Heart left ventricle (tissue), 16 donors: ENCODE measurements at regions of chr13 and their contacts with region 1.

Region 1: DNA sequence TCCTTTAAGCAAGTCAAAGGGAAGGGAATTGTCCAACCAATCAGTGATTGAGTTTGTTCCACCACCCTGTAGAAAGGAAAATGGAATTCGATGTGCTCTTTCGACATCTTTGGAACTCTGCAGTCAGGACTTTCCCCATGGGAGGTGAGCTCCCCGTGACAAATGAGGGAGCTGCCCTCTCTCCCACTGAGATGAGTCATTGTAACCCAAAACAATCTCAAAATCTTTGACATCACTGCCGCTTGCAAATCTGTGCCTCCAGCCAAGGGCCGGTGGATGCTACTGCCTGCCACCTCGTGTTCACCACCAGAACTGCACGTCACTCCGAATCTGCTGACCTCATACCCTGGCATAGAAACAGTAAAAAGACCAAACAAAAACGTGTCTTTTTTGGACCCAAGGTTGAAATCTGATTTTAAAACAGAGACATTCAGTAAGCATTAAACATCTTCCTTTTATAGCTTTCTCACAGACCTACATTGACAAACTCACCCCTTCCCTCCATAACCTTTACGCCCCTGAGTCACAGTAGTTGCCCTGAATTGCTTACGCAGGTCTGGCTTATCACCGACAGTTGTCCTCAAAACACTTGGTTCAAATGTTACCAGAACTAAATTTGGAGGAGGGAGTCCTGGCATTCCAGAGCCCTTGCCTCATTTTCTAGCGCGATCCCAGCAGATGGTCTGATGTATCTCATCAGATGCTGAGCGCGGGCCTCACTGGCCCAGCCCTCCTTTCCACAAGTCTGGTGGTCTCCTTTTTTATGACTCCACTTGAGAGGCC is 105.2 kb downstream of the COL4A2 start:
- DNase-seq: peak; percentile 87 to 92 (median 88)
- ATAC-seq: peak; percentile 80 to 86 (median 83)
- H3K4me3 ChIP-seq: no peak overlapping the region
- H3K27ac ChIP-seq: peak overlapping the region; percentile 51 to 95 (median 83)
- H3K4me1 ChIP-seq: peaks cover 11 to 97% (median 76%) of the 10 kb centered on the region in 12 donors
- H3K27me3 ChIP-seq: no peaks in the 10 kb centered on the region
- CTCF ChIP-seq: peak; percentile 87 to 99 (median 92)
- POLR2A ChIP-seq: peak in 1 of 2 donors; percentile 26

Region 2: GRCh38 chr13:110225609-110226562 is 186.4 kb before region 1 on chr13:
- intact Hi-C with region 1: loop called (anchors 2 to 5 kb)
- DNase-seq: no peak
- ATAC-seq: no peak
- H3K4me3 ChIP-seq: no peak overlapping the region
- H3K27ac ChIP-seq: peak overlapping the region in 11 of 12 donors; percentile 8 to 88 (median 39)
- H3K4me1 ChIP-seq: peaks cover 9 to 79% (median 56%) of the 10 kb centered on the region in 12 donors
- H3K27me3 ChIP-seq: no peaks in the 10 kb centered on the region
- CTCF ChIP-seq: no peak
- POLR2A ChIP-seq: no peak

Region 3: DNA sequence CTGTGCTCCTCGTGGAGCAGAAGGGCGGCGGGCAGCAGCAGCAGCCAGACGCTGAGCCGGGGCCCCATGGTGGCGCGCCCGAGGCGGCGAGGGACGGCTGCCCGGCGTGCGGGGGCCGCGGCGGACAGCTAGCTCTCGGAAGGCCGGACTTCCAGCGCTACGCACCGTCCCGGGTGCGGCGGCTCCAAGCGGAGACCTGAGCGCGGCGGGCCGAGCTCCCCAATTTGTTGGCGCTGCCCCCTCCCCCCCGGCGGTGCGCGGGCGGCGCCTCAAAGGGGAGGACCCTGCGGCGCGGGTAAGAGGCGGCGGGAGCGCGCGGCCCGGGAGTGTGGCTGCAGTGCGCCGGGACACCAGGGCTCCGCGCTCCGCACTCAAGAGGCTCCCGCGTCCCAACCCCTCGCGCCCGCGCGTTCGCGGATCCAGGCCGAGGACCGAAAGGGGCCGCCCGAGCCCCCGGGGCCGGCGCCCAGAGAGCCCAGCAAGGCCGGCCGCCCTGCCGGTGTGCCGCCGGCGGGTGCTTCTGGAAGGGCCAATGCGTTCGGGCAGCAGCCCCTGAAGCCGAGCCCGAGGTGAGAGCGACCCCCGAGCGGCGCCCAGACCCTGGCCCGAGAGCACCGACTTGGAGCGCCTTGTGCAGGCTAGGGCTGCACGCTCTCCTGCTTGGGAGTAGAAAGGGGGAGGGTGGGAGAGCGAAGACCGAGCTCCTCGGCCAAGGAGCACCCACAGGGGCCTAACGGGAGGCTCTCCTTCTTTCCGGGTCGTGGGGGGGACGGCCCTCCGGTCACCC is 105.2 kb before region 1 on chr13 and contains the starts of genes COL4A1 and COL4A2:
- intact Hi-C with region 1: loop called in 8 of 10 experiments (anchors 2 to 10 kb)
- DNase-seq: peak; percentile 87 to 90 (median 88)
- ATAC-seq: peak; percentile 39 to 89 (median 76)
- H3K4me3 ChIP-seq: peak within 1 kb of the TSS; percentile 67 to 99 (median 87)
- H3K27ac ChIP-seq: peak within 1 kb of the TSS; percentile 92 to 99 (median 97)
- H3K4me1 ChIP-seq: peaks cover 17 to 75% (median 64%) of the 10 kb centered on the region in 12 donors
- H3K27me3 ChIP-seq: peaks cover 0 to 41% (median 0%) of the 10 kb centered on the region in 9 donors
- CTCF ChIP-seq: peak in 2 of 12 donors; percentile 8 to 12
- POLR2A ChIP-seq: peak; percentile 77 to 98
- total RNA-seq, gene COL4A1: 91.9 to 428 (median 184) TPM
- total RNA-seq, gene COL4A2: 94.0 to 377 (median 166) TPM

Region 4: GRCh38 chr13:110319774-110320509 is 92.4 kb before region 1 on chr13:
- intact Hi-C with region 1: loop called in 2 of 10 experiments (anchors 2 to 5 kb)
- DNase-seq: no peak
- ATAC-seq: peak in 3 of 4 donors; percentile 5 to 42 (median 32)
- H3K4me3 ChIP-seq: peak overlapping the region in 6 of 12 donors; percentile 13 to 33 (median 19)
- H3K27ac ChIP-seq: peak overlapping the region; percentile 11 to 95 (median 70)
- H3K4me1 ChIP-seq: peaks cover 29 to 100% (median 89%) of the 10 kb centered on the region in 12 donors
- H3K27me3 ChIP-seq: no peaks in the 10 kb centered on the region
- CTCF ChIP-seq: no peak
- POLR2A ChIP-seq: no peak

Region 5: DNA sequence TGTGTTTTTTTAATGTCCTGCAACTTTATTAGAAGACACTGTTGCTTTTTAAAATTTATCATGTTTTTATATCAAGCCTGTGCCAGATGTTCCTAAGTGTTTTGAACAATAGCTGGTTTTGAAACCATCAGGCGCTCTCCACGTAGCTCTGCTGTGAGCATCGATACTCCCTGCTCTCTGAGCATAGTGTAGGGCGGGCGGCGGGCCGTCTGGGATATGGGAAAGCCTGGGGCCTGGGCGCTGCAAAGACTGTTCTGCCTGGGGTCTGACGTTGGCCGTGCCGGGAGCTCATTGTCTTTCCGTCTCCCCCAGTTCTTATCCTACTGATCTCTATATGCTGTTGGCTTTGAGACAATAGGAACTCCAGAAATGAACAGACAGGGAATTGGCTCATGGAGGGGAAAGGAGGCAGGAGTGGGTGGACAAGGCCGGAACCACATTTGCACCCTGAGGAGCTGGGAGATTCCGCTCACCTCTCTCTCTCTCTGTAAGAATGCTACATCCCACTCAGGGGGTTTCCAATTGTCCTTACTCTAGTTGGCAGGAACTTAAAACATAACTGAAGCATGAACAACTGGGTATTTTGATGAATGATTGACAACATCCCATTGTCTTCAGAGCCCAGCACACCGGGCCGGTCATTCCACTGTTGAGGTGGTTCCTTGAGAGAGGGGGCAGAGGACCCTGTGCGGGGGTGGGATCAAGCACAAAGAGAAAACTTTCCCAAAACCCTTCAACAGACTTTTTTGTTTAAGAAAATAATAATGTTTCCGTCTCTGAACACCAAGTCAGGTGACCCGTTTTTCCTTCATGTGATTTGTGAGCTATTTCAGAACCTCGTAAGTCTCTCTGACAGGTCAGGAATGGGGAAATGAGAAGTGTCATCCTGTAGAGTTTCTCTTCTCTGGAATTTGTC is 40.5 kb before region 1 on chr13:
- intact Hi-C with region 1: loop called in 1 of 10 experiments (anchors 5 kb)
- DNase-seq: no peak
- ATAC-seq: peak in 3 of 4 donors; percentile 39 to 77 (median 58)
- H3K4me3 ChIP-seq: peak overlapping the region in 3 of 12 donors; percentile 0 to 12 (median 8)
- H3K27ac ChIP-seq: peak overlapping the region in 11 of 12 donors; percentile 49 to 75 (median 60)
- H3K4me1 ChIP-seq: peaks cover 5 to 71% (median 60%) of the 10 kb centered on the region in 12 donors
- H3K27me3 ChIP-seq: no peaks in the 10 kb centered on the region
- CTCF ChIP-seq: no peak
- POLR2A ChIP-seq: no peak